Activated CD4-positive, alpha-beta memory T cell treated with anti-CD3 and anti-CD28 coated beads for 36 hours (primary cell): ENCODE measurements at regions of chr5 and their contacts with region 1.

Region 1: DNA sequence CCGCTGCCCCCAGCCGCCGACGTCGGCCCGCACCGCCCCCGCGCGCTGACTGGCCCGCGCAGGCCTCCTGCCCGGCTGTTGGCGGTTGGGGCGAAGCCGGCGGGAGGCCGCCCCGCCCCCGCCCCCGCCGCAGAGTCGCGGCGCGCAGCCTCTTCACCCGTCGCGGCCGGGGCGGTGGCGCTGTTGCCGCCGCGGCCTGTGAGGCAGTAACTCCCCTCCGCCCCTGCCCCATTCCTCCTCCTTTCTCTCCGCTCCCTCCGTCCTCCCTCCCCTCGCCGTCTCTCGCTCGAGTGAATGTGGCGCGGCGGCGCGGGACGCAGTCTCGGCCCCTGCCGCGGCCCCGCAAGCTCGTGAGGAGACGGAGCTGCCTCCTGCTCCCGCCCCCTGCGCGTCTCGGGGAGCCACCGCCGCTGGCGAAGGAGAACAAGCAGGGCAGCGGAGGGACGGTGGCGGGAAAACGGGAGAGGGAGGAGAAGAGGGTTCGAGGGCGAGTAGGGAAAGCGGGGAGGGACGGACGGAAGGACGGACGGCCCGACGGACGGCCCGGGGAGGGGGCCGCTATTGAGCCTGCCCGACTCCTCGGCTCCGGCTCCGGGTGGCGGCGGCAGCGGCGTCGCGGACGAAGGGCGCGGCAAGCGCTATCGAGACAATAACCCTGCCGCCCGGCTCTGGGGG is 637 bp upstream of the ERBIN start:
- DNase-seq: peak; percentile 81
- H3K4me3 Mint-ChIP-seq: peak overlapping the region; percentile 89
- H3K27ac Mint-ChIP-seq: peak overlapping the region; percentile 98
- H3K4me1 Mint-ChIP-seq: peaks cover 30% of the 10 kb centered on the region
- H3K27me3 Mint-ChIP-seq: no peaks in the 10 kb centered on the region

Region 2: DNA sequence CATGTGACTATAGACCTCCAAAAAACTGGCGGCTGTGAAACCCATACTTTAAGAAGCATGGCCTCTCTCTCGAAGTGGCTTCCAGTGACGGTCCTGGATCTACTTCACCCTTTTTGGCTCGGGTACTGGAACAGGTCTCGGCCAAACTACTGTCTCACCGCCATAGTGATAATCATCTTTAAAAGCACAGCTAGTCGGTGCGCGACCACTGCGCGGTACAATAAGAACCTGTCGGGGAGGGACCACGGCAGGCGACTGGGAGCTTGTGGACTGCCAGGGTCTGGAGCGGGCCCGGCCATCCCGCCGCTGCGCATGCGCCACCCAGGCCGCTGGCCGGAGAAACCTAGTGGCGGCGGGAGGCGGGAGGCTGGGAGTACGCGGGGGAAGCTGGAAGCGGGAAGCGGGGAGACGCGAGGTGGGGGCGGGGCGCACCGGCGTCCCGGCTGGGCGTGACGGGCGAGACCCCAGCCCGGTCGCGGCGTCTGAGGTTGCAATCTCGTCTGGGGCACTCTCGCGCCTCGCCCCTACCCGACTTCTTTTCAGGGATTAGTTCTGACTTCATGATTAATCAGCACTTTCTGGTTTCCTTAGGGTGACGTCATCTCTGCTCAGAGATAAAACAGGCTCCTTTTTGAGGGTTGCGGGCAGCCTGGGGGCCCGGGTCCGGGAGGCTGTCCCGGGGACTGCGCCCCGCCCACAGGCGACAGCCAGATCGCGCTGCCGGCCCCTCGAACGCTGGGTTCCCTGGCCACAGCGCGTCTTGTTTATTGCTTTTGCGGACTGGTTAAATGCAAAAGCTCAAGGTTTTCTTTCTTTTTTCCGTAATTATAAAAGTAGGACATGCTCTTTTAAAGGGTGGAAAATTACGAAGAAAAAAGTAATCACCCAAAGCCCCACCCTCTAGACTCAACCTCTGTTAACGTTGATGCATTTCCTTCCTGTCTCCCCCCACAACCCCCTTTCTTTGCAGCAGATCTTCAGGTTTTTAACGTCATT is 890.2 kb before region 1 on chr5:
- CTCF ChIA-PET with region 1: no interaction called
- POLR2A ChIA-PET with region 1: no interaction called
- intact Hi-C with region 1: loop called (anchors 5 kb)
- DNase-seq: peak; percentile 87
- H3K4me3 Mint-ChIP-seq: peak overlapping the region; percentile 72
- H3K27ac Mint-ChIP-seq: peak overlapping the region; percentile 89
- H3K4me1 Mint-ChIP-seq: peaks cover 31% of the 10 kb centered on the region
- H3K27me3 Mint-ChIP-seq: no peaks in the 10 kb centered on the region

Region 3: GRCh38 chr5:65624571-65625555 is 300.9 kb before region 1 on chr5 and contains the starts of genes SHLD3 and TRAPPC13:
- CTCF ChIA-PET with region 1: no interaction called
- POLR2A ChIA-PET with region 1: interaction called, 3 read pairs
- intact Hi-C with region 1: loop called (anchors 2 kb)
- DNase-seq: peak; percentile 89
- H3K4me3 Mint-ChIP-seq: peak within 1 kb of the TSS; percentile 96
- H3K27ac Mint-ChIP-seq: peak within 1 kb of the TSS; percentile 96
- H3K4me1 Mint-ChIP-seq: peaks cover 39% of the 10 kb centered on the region
- H3K27me3 Mint-ChIP-seq: no peaks in the 10 kb centered on the region
- total RNA-seq, gene SHLD3: 2.6 to 3.1 TPM
- total RNA-seq, gene TRAPPC13: 22.4 to 23.2 TPM

Region 4: DNA sequence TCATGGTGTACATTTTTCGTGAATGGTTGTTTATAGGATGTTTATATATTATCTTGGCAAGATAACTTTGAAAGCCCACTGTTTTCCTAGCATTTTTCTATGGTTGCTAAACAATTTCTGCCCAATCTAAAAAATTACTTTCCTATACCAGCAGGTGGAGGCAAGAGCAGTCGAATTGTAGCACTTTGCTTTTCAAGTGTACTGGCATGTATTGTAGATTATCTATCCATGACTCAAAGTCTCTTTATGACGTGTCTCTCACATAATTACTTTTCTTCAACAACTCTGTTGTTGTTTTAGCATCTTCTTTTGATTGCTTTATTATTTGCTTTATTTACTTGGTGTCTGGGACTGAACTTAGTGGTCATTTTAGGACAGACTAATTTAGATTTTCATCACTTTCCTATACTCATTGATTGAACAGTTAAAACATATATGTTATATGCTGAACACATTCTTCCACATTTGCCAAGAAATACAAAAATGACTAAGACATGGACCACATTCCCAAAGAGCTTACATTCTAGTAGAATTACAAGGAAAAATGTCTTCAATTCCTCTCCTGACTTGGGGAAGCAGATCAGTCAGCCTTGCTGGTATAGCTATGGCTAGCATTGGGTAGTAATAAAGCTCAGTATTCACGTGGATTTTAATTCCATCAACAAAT is 183.0 kb before region 1 on chr5:
- CTCF ChIA-PET with region 1: interaction called, 3 read pairs
- POLR2A ChIA-PET with region 1: no interaction called
- intact Hi-C with region 1: loop called (anchors 1 kb)
- DNase-seq: peak; percentile 42
- H3K4me3 Mint-ChIP-seq: no peak overlapping the region
- H3K27ac Mint-ChIP-seq: no peak overlapping the region
- H3K4me1 Mint-ChIP-seq: peaks cover 12% of the 10 kb centered on the region
- H3K27me3 Mint-ChIP-seq: no peaks in the 10 kb centered on the region

Region 5: DNA sequence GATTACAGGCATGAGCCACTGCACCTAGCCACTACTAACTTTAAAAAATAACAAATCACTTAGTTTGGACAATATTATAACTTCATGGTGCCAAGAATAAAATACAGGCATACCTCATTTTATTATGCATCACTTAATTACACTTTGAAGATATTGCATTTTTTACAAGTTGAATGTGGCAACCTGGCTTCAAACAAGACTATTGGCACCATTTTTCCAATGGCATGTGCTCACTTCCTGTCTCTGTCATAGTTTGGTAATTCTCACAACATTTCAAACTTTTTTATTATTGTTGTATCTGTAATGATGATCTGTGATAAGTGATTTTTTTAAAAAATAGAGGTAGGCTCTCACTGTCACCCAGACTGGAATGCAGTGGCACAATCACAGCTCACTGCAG is 49.2 kb before region 1 on chr5:
- CTCF ChIA-PET with region 1: no interaction called
- POLR2A ChIA-PET with region 1: no interaction called
- intact Hi-C with region 1: loop called (anchors 5 kb)
- DNase-seq: no peak
- H3K4me3 Mint-ChIP-seq: no peak overlapping the region
- H3K27ac Mint-ChIP-seq: no peak overlapping the region
- H3K4me1 Mint-ChIP-seq: peaks cover 4% of the 10 kb centered on the region
- H3K27me3 Mint-ChIP-seq: no peaks in the 10 kb centered on the region

Region 6: GRCh38 chr5:65948115-65948747 is 22.5 kb after region 1 on chr5:
- CTCF ChIA-PET with region 1: no interaction called
- POLR2A ChIA-PET with region 1: no interaction called
- intact Hi-C with region 1: no loop called
- DNase-seq: no peak
- H3K4me3 Mint-ChIP-seq: no peak overlapping the region
- H3K27ac Mint-ChIP-seq: no peak overlapping the region
- H3K4me1 Mint-ChIP-seq: peaks cover 43% of the 10 kb centered on the region
- H3K27me3 Mint-ChIP-seq: no peaks in the 10 kb centered on the region

Region 7: DNA sequence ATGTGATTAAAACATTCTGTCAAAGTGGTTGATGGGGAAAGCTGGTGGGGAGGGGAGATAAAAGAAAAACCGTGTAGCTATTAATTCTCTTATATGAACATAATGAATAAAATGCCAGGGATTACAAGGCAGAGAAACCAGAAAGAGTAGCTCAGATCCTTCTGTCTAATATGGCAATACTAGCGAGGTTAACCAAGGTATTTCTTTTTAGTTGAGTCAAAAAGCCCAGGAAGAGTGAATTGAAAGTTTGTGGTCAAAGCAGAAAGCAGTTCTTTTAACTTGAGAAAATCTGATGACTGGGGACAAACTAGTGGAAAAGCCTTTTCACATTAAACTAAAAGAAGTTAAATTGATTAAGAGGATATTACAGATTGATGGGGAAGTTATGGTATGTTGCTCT is 76.7 kb after region 1 on chr5:
- CTCF ChIA-PET with region 1: no interaction called
- POLR2A ChIA-PET with region 1: interaction called, 6 read pairs
- intact Hi-C with region 1: loop called (anchors 2 kb)
- DNase-seq: no peak
- H3K4me3 Mint-ChIP-seq: no peak overlapping the region
- H3K27ac Mint-ChIP-seq: no peak overlapping the region
- H3K4me1 Mint-ChIP-seq: peaks cover 38% of the 10 kb centered on the region
- H3K27me3 Mint-ChIP-seq: no peaks in the 10 kb centered on the region

Region 8: GRCh38 chr5:66144074-66144833 is 218.5 kb after region 1 on chr5 and contains the start of gene SREK1:
- CTCF ChIA-PET with region 1: interaction called, 3 read pairs
- POLR2A ChIA-PET with region 1: interaction called, 4 read pairs
- intact Hi-C with region 1: loop called (anchors 1 kb)
- DNase-seq: peak; percentile 92
- H3K4me3 Mint-ChIP-seq: peak within 1 kb of the TSS; percentile 93
- H3K27ac Mint-ChIP-seq: peak within 1 kb of the TSS; percentile 98
- H3K4me1 Mint-ChIP-seq: peaks cover 51% of the 10 kb centered on the region
- H3K27me3 Mint-ChIP-seq: no peaks in the 10 kb centered on the region
- total RNA-seq, gene SREK1: 50.9 to 54.1 TPM

Region 9: GRCh38 chr5:67549296-67549618 is 1623.5 kb after region 1 on chr5:
- CTCF ChIA-PET with region 1: no interaction called
- POLR2A ChIA-PET with region 1: no interaction called
- intact Hi-C with region 1: no loop called
- DNase-seq: no peak
- H3K4me3 Mint-ChIP-seq: no peak overlapping the region
- H3K27ac Mint-ChIP-seq: no peak overlapping the region
- H3K4me1 Mint-ChIP-seq: peaks cover 10% of the 10 kb centered on the region
- H3K27me3 Mint-ChIP-seq: no peaks in the 10 kb centered on the region